Sigmoid colon (tissue), 7 donors: ENCODE measurements at regions of chr11 and their contacts with region 1.

Region 1: DNA sequence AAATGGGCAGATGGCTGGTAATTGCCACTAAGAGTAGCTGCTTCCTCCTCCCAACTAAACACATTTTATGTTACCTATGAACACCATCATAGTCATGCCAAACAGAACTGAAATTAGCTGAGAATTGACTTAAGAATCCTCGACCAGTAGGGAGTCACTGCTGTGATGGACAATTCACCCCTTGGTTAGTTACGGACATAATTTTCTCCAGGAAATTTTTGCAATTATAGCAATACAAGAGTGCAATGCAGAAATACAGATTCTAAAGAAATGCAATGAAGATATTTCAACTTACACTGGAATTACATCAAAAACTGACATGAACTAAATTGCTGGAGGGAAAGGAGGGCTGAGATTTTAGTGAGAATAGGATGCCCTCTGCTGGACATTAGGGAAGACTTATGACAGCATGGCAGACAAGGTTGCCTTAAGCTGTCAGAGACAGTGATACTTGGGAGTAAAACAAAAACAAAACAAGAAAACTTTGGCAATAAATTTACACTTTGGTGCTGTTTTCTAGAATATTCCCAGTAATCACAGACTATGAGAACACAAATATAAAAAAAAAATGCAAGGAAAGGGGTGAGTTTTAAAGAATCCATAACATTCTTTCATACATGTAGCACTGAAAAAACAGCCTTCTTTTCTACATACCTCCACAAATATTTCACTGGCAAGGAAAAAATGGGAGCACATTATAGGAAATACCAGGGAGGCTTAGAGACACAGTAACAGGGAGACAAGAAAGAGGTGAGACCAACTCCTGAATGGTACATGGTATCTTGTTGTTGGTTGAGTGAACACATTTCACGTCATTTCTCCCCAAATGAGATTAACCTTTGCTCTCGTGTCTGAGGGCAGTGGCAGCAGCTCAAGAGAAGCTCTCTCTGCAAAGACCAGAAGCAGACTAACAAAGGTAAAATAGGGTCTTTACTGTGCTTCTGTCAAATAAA is 11.2 kb upstream of the PPP2R1B start:
- DNase-seq: no peak
- H3K4me3 ChIP-seq: no peak overlapping the region
- H3K27ac ChIP-seq: peak overlapping the region in 1 of 4 donors; percentile 6
- H3K4me1 ChIP-seq: no peaks in the 10 kb centered on the region
- H3K27me3 ChIP-seq: no peaks in the 10 kb centered on the region
- CTCF ChIP-seq: peak; percentile 69 to 83 (median 76)
- EP300 ChIP-seq: no peak
- POLR2A ChIP-seq: no peak

Region 2: DNA sequence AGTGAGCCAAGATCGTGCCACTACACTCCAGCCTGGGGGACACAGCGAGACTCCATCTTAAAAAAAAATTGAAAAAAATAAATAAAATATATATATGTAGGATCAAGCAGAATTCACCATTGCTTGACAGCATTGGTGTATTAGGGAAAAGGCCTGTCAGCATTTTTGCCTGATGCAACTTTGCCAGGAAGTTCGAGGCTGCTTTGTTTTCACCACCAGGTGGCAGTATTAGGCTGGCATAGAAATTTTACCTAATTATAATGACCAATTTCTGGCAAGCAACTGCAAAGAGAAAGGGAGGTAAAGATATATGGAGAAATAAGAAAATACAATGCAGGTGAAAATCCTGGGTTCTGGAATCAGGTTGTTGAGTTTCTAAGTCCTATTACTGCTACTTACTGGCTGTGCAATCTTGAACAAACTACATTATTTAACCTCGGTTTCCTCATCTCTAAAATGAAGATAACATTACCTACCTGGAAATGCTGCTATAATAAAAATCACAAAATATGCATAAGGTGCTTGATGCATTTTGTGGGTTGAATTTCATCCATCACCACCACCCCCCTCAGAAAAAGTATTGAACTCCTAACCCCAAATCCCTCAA is 212.2 kb before region 1 on chr11:
- intact Hi-C with region 1: loop called (anchors 1 kb)
- DNase-seq: peak; percentile 78
- H3K4me3 ChIP-seq: no peak overlapping the region
- H3K27ac ChIP-seq: no peak overlapping the region
- H3K4me1 ChIP-seq: peaks cover 0 to 8% (median 0%) of the 10 kb centered on the region in 4 donors
- H3K27me3 ChIP-seq: no peaks in the 10 kb centered on the region
- CTCF ChIP-seq: peak; percentile 66 to 89 (median 76)
- EP300 ChIP-seq: no peak
- POLR2A ChIP-seq: no peak

Region 3: GRCh38 chr11:111586388-111586831 is 191.0 kb before region 1 on chr11:
- intact Hi-C with region 1: loop called (anchors 5 kb)
- DNase-seq: no peak
- H3K4me3 ChIP-seq: no peak overlapping the region
- H3K27ac ChIP-seq: no peak overlapping the region
- H3K4me1 ChIP-seq: peaks cover 0 to 4% (median 0%) of the 10 kb centered on the region in 4 donors
- H3K27me3 ChIP-seq: no peaks in the 10 kb centered on the region
- CTCF ChIP-seq: peak; percentile 38 to 54 (median 51)
- EP300 ChIP-seq: no peak
- POLR2A ChIP-seq: no peak

Region 4: DNA sequence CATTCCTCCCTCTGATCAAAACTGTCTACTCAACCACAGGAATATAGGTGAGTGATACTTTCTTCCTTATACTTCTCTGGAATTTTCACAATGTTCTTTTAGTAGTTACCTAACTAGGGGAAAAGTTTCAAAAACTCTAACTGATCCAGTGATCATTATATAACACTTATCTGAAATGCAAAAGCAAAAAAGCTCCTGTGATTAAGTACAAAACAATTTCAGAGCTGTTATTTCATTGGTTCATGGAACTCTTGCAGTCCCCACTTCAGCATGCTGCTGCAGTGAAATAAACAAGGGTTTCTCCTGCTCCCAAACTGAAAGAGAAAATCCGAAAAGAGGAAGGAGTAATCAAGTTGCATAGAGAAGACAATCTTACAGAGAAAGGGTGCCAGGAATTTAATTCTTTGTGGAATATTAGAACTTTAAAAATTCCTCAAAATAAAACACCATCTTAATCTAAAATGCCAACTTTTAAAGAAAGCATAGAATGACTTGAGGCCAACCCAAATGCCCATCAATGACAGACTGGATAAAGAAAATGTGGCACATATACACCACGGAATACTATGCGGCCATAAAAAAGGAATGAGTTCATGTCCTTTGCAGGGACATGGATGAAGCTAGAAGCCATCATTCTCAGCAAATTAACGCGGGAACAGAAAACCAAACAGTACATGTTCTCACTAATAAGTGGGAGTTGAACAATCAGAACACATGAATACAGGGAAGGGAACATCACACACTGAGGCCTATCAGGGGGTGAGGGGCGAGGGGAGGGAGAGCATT is 31.5 kb before region 1 on chr11:
- intact Hi-C with region 1: no loop called
- DNase-seq: no peak
- H3K4me3 ChIP-seq: no peak overlapping the region
- H3K27ac ChIP-seq: peak overlapping the region; percentile 31 to 73 (median 62)
- H3K4me1 ChIP-seq: peaks cover 0 to 16% (median 13%) of the 10 kb centered on the region in 4 donors
- H3K27me3 ChIP-seq: no peaks in the 10 kb centered on the region
- CTCF ChIP-seq: no peak
- EP300 ChIP-seq: no peak
- POLR2A ChIP-seq: no peak

Region 5: DNA sequence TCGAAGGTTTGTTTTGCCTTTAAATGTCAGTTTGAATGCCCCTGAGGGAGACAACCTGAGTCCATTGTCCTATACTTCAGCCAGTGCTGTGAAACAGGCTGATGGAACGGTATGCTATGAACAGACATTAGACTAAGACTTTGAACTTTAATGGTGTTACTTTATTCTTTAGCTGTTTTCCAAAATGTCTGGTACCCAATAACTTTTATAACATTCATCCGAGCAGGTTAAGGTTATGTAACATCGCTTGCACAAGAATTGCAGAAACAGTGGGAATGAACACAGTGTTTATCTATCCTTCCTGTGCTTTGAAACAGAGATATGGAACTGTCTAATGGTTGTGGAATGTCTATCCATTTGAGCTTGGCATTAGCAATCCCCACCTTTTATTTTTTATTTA is 436.4 kb after region 1 on chr11:
- intact Hi-C with region 1: no loop called
- DNase-seq: no peak
- H3K4me3 ChIP-seq: no peak overlapping the region
- H3K27ac ChIP-seq: no peak overlapping the region
- H3K4me1 ChIP-seq: no peaks in the 10 kb centered on the region
- H3K27me3 ChIP-seq: no peaks in the 10 kb centered on the region
- CTCF ChIP-seq: no peak
- EP300 ChIP-seq: no peak
- POLR2A ChIP-seq: no peak